ENCODE measurements at regions of chr17 and their contacts with region 1.

Region 1: GRCh38 chr17:29777663-29778062 is 152.4 kb downstream of the SSH2 start:
- DNase-seq: no peak
- H3K4me3 ChIP-seq: no peak overlapping the region
- H3K27ac ChIP-seq: peak overlapping the region in 1 of 8 donors; percentile 11
- H3K4me1 ChIP-seq: peaks cover 6 to 20% (median 9%) of the 10 kb centered on the region in 6 donors
- H3K27me3 ChIP-seq: no peaks in the 10 kb centered on the region
- CTCF ChIP-seq: no peak
- POLR2A ChIP-seq: no peak

Region 2: DNA sequence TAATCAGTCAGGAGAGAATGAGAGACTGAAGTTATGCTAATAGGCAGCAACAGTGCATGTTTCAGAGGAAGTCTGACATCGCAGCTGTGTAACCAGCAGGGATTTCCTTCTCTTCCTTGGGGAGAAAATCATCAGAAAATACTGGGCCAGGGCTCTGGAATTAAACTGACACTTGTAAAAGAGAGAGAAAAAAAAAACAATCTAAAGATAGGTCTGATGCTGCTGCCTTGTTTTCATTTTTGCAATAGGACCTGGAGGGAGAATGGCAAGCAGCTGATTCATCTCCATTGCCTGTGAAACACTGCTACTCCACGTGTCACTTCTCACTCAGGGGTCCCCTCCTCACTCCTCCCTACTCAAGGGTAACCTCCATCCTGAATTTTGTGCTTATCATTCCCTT is 137.2 kb before region 1 on chr17:
- intact Hi-C with region 1: loop called (anchors 5 kb)
- DNase-seq: no peak
- H3K4me3 ChIP-seq: no peak overlapping the region
- H3K27ac ChIP-seq: peak overlapping the region in 5 of 8 donors; percentile 5 to 59 (median 31)
- H3K4me1 ChIP-seq: peaks cover 6 to 81% (median 35%) of the 10 kb centered on the region in 6 donors
- H3K27me3 ChIP-seq: no peaks in the 10 kb centered on the region
- CTCF ChIP-seq: no peak
- POLR2A ChIP-seq: no peak

Region 3: DNA sequence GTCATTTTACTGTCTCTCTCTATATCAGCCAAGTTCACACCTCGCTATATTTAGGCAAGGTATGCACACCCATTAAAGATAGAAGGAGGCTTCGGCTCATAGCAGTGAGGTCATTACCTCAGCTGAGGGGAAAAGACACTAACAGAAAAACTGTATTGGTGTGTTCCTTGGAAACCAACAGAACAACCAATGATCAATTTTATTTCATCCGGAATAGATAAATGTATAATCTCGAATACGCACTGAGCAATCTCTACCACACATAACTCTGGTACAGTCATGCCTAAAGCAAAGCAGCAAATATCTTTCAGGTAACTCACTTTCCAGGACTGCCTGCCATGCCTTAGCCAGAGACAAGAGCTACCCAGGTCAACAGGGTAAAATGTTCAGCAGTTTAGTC is 45.0 kb before region 1 on chr17:
- intact Hi-C with region 1: no loop called
- DNase-seq: no peak
- H3K4me3 ChIP-seq: no peak overlapping the region
- H3K27ac ChIP-seq: peak overlapping the region in 3 of 8 donors; percentile 16 to 66 (median 41)
- H3K4me1 ChIP-seq: peaks cover 2 to 92% (median 36%) of the 10 kb centered on the region in 6 donors
- H3K27me3 ChIP-seq: no peaks in the 10 kb centered on the region
- CTCF ChIP-seq: no peak
- POLR2A ChIP-seq: no peak

Region 4: DNA sequence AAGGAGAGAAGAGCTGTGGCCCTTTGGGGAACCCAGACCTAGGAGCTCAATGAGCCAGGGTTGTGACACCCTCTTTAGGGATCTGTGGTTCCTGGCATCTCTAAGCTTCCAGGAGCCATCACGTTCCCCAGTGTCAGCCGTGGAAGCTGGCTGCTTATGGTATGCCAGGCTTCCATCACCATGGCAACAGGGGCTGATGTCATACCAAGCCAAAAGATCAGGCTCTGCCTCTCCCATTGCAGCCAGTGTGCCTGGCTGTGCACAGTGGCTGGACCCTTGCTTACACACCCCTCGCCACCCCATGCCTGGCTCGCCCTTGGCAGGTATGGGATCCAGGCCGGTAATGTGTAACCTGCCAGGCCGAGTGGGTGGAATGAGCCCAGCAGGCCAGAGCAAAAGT is 61.3 kb after region 1 on chr17:
- intact Hi-C with region 1: no loop called
- DNase-seq: no peak
- H3K4me3 ChIP-seq: no peak overlapping the region
- H3K27ac ChIP-seq: no peak overlapping the region
- H3K4me1 ChIP-seq: no peaks in the 10 kb centered on the region
- H3K27me3 ChIP-seq: no peaks in the 10 kb centered on the region
- CTCF ChIP-seq: no peak
- POLR2A ChIP-seq: no peak

Measured in spleen (tissue), 13 donors.